Astrocyte of the cerebellum (primary cell): ENCODE measurements at regions of chr1 and their contacts with region 1.

Region 1: DNA sequence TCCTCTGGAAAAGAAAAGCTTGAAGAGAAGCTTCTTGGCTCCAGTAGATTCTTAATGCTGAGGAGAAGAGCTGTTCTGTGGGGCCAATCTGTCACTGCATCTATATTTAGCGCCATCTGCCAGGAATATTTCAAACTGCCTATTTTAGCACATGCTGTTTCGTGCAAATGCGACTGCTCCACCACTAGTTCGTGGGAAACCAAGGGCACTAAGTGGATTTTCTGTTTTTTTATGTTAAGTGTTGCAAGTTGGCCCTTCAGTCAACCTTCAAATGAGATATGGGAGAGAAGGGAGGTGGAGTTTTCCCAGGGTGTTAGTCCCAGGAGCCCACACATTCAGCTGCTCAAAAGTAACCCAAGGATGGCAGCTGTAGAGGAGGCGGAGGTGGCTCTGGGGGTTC is 91.9 kb downstream of the TSEN15 start:
- DNase-seq: no peak
- H3K4me3 ChIP-seq: no peak overlapping the region
- CTCF ChIP-seq: no peak

Region 2: DNA sequence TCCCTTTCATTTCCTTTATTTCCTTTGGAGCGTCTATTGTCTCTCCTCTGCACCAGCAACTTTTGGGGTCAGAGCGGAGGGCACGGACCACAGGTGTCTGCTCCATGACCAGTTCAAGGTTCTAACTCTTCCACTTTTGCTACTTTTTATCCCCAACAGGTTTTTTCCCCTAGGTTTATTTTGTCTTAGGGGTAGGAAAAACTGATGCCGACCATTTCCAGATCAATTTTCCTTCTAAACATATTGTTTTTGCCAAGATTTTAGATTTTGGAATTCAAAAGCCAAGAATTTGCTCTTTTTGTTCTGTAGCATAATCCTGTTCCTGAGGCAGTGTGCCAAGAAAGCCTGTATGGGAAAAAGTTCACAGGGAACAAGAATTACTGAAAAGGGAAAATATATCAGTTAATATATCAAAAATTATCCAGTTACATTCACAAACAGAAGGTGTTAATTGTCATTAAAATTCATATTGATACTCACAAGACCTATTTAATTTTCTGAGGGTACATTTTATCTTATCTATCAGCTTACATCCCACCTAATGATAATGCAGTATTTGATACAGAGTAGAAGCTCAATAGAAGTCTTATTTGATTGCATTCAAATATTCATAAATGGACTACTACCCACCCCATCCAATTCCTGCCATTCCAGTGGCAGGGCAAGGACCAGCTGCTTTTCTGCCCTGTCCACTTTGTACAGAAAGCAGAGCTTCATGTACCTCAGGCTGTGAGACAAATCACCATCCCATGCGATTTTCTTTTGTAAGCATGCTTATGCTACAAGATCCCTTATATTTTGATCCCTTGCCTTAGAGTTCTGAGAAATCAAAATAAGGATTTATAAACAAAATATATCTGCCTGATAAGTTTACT is 60.7 kb before region 1 on chr1:
- in situ Hi-C with region 1: loop called (anchors 5 kb)
- DNase-seq: no peak
- H3K4me3 ChIP-seq: no peak overlapping the region
- CTCF ChIP-seq: no peak

Region 3: DNA sequence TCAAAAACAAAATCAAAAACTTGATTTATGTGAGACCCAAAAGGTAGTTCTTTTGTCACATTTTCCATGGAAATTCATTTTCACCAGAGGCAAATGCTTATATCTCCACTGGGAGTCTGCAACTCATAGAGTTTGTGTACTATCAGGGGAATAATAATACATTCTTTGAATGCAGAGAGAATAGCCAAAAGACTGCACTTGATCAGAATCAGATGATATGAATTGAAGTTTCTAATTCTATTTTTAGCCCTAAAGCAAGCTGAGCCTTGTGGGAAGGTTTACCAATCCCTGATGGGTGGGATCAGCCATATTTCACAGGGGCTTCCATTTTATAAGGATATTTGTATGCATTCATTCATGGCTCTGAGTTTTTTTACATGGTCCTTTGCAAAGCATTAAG is 42.3 kb before region 1 on chr1:
- in situ Hi-C with region 1: no loop called
- DNase-seq: no peak
- H3K4me3 ChIP-seq: no peak overlapping the region
- CTCF ChIP-seq: no peak

Region 4: DNA sequence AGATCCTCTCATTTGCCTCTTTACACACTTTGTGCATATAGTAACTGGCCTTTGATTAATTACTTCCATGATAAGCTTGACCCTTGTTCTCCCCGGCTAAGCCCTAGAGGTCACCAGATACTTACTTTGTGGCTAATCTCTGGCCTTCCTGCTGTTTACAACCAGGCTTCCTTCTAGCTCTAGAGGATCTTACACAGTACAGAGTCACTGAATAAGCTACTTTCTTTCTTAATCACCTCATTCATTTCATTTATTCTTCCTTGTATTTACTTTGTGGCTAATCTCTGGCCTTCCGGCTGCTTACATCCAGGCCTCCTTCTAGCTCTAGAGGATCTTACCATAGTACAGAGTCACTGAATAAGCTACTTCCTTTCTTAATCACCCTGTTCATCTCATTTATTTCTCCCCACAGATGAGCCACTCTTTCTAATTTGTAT is 99.1 kb after region 1 on chr1:
- in situ Hi-C with region 1: loop called (anchors 5 kb)
- DNase-seq: no peak
- H3K4me3 ChIP-seq: no peak overlapping the region
- CTCF ChIP-seq: no peak